Activated T-helper 2 cell treated with anti-CD3 and anti-CD28 coated beads, Interferon-gamma antibody, Interleukin-2, Interleukin-4, amounts not matched to agents 10 μg/mL and 5 μg/mL and 100 μg/mL, durations not matched to agents 14 hours and 24 hours and 36 hours (primary cell): ENCODE measurements at regions of chr11 and their contacts with region 1.

Region 1: GRCh38 chr11:9265211-9266131 is at the start of gene DENND5A:
- DNase-seq: peak; percentile 39
- H3K4me3 Mint-ChIP-seq: peak within 1 kb of the TSS; percentile 86
- H3K27ac Mint-ChIP-seq: peak within 1 kb of the TSS; percentile 93
- H3K4me1 Mint-ChIP-seq: peaks cover 33% of the 10 kb centered on the region
- H3K27me3 Mint-ChIP-seq: peaks cover 31% of the 10 kb centered on the region
- total RNA-seq, gene DENND5A: 56.7 and 61.6 TPM in 2 replicates

Region 2: DNA sequence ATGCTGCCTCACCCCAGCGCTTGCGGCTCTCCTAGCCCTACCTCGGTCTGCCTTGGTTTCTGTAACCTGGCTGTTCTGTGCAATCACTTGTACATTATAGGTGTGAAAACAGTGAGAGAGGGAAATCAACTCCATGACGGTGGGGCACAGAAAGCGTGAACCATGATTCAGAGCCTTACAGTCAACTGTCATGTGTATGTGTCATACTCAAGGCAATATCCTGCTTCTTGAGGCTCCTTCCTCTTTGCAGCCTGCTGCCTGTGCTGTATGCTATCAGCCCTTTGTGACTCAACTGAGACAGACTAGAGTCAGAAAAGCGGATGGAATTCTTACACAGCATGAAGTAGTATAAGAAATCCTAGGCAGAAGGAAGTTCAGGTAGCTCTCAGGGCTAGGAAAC is 263.7 kb before region 1 on chr11:
- intact Hi-C with region 1: no loop called
- DNase-seq: peak; percentile 41
- H3K4me3 Mint-ChIP-seq: no peak overlapping the region
- H3K27ac Mint-ChIP-seq: peak overlapping the region; percentile 38
- H3K4me1 Mint-ChIP-seq: peaks cover 29% of the 10 kb centered on the region
- H3K27me3 Mint-ChIP-seq: peaks cover 33% of the 10 kb centered on the region

Region 3: GRCh38 chr11:9176550-9176949 is 88.9 kb before region 1 on chr11:
- intact Hi-C with region 1: loop called (anchors 5 kb)
- DNase-seq: no peak
- H3K4me3 Mint-ChIP-seq: no peak overlapping the region
- H3K27ac Mint-ChIP-seq: no peak overlapping the region
- H3K4me1 Mint-ChIP-seq: peaks cover 12% of the 10 kb centered on the region
- H3K27me3 Mint-ChIP-seq: no peaks in the 10 kb centered on the region

Region 4: DNA sequence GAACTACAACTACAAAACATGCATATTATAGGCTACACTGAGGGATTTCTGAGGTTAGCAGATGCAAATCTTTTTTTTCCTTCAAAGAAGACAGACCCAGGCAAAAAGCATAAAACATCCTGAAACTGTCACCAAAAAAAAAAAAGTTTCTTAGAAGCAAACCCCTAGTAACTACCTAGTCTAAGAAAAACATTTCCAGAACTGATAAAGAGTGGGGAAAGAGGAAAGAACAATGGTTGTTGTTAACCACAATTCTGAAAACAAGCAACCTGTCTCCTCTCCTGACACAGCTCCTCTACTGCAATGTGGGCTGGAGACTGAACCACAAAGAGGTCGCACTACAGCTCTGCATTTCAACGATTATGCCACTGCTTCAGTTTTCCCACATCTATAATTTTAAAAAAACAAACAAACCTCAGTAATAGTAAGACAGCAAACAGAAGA is 15.3 kb before region 1 on chr11:
- intact Hi-C with region 1: loop called (anchors 1 kb)
- DNase-seq: peak; percentile 32
- H3K4me3 Mint-ChIP-seq: peak overlapping the region; percentile 53
- H3K27ac Mint-ChIP-seq: peak overlapping the region; percentile 73
- H3K4me1 Mint-ChIP-seq: peaks cover 51% of the 10 kb centered on the region
- H3K27me3 Mint-ChIP-seq: no peaks in the 10 kb centered on the region

Region 5: GRCh38 chr11:9314291-9315036 is 49.0 kb after region 1 on chr11 and contains the start of gene TMEM41B:
- intact Hi-C with region 1: loop called (anchors 1 kb)
- DNase-seq: peak; percentile 99
- H3K4me3 Mint-ChIP-seq: peak within 1 kb of the TSS; percentile 96
- H3K27ac Mint-ChIP-seq: peak within 1 kb of the TSS; percentile 97
- H3K4me1 Mint-ChIP-seq: peaks cover 27% of the 10 kb centered on the region
- H3K27me3 Mint-ChIP-seq: peaks cover 20% of the 10 kb centered on the region
- total RNA-seq, gene TMEM41B: 29.8 and 31.9 TPM in 2 replicates

Region 6: GRCh38 chr11:9384535-9385303 is 119.2 kb after region 1 on chr11 and contains the start of gene IPO7:
- intact Hi-C with region 1: loop called (anchors 5 kb)
- DNase-seq: peak; percentile 87
- H3K4me3 Mint-ChIP-seq: peak within 1 kb of the TSS; percentile 93
- H3K27ac Mint-ChIP-seq: peak within 1 kb of the TSS; percentile 92
- H3K4me1 Mint-ChIP-seq: peaks cover 21% of the 10 kb centered on the region
- H3K27me3 Mint-ChIP-seq: no peaks in the 10 kb centered on the region
- total RNA-seq, gene IPO7: 143 and 155 TPM in 2 replicates